B cell (primary cell): ENCODE measurements at regions of chr14 and their contacts with region 1.

Region 1: DNA sequence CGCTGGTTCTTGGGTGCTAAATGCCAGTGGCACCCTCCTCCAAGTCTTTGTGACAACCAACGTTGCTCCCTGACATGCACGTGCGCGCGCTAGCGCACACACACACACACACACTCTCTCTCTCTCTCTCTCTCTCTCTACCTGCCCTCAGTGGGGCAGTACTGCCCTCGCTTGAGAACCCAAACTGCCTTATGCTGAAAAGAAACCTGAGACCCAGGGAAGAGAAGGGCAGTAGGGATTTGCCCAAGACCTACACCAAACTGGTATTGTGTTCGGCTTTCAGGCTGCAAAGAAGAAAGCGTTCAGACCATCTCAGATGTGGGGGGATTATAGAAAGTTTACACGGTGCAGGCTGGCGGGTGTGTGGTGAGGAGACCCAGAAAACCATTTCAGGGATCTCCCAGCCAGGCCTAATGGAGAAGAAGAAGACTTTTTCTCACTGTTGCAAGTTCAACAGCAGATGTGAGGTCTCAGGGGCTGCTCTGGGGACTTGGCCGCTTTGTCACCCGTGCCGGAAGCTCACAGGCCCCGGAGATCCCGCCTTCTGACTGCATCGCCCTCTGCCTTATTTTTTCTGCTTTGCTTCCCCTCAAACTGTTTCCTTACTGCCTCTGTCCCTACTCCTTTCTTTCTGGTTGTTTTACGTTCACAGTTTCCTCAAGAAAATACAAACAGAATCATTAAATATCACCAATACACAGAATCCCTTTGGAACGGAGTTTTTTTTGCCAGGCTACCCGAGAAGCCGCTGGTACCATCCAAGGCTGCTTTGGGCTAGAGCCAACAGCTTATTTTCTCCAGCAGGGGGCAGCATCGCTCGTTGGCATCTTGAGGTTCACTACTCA is 82.4 kb downstream of the PPM1A start:
- DNase-seq: peak; percentile 85
- ATAC-seq: peak; percentile 66
- H3K4me3 ChIP-seq: peak overlapping the region; percentile 49 to 87 (median 73)
- H3K4me3 Mint-ChIP-seq: peak overlapping the region; percentile 90
- H3K27ac ChIP-seq: peak overlapping the region; percentile 63 to 68
- H3K27ac Mint-ChIP-seq: peak overlapping the region; percentile 71
- H3K4me1 ChIP-seq: peaks cover 16 to 20% of the 10 kb centered on the region in 2 donors
- H3K4me1 Mint-ChIP-seq: peaks cover 26% of the 10 kb centered on the region
- H3K27me3 ChIP-seq: peaks cover 0 to 17% (median 4%) of the 10 kb centered on the region in 4 experiments
- H3K27me3 Mint-ChIP-seq: peaks cover 23% of the 10 kb centered on the region
- CTCF ChIP-seq: peak; percentile 98

Region 2: DNA sequence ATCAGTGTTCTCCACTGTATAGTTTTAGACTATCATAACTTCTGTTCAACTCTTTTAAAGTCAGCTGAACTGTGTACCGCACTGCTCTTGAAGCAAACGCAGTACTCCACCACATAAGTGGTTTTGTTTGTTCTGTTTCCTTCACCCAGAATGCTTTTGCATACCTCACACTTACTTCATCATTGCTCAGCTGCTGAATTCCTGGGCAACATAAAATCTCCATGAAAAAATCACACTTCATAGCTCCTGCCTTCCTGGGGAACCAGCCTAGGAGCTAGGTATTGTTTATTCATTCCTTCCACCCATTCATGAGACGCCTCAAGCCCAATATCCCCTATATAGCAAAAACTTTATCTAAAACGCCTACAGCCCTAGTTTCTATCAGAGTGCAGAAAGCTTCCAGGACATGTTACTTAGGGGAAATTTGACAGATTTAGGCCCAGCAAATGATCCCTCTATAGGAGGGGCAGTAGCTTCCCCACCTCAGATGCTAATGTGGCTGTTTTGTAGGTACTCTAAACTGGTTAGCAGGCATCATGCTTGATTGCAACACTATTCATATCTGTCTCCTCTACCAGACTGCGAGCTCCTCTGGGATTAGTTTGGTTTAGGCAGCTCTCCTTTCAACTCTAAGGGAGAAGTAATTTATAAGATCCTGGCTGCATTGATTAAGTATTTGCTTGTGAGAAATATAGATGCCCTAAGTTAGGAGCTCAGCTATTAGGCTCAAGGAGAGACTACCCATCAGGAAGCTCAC is 367.0 kb before region 1 on chr14:
- CTCF ChIA-PET with region 1: interaction called, 3 read pairs
- POLR2A ChIA-PET with region 1: no interaction called
- intact Hi-C with region 1: loop called (anchors 5 kb)
- DNase-seq: no peak
- ATAC-seq: peak; percentile 11
- H3K4me3 ChIP-seq: peak overlapping the region in 3 of 5 experiments; percentile 18 to 63 (median 55)
- H3K4me3 Mint-ChIP-seq: peak overlapping the region; percentile 86
- H3K27ac ChIP-seq: peak overlapping the region; percentile 86
- H3K27ac Mint-ChIP-seq: peak overlapping the region; percentile 88
- H3K4me1 ChIP-seq: peaks cover 10 to 15% of the 10 kb centered on the region in 2 donors
- H3K4me1 Mint-ChIP-seq: peaks cover 13% of the 10 kb centered on the region
- H3K27me3 ChIP-seq: no peaks in the 10 kb centered on the region
- H3K27me3 Mint-ChIP-seq: no peaks in the 10 kb centered on the region
- CTCF ChIP-seq: no peak

Region 3: DNA sequence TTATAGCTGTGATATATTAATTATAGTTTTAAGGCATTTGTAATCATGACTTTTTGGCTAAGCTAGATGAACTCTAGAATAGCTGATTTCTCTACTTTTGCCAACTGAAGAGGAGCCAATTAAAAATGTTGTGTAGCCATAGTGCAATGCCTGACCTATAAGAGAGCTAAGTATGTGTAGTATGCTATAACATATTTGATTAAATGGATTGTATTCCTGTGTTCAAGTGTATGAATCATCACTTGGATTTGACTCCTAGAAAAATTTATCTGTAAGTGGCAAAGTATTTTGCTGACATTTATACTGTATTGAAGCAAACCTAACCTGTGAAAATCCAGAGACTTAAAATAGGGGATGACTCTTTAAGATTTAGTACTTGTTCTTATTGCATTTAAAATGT is 205.5 kb before region 1 on chr14:
- CTCF ChIA-PET with region 1: no interaction called
- POLR2A ChIA-PET with region 1: no interaction called
- intact Hi-C with region 1: no loop called
- DNase-seq: no peak
- ATAC-seq: no peak
- H3K4me3 ChIP-seq: no peak overlapping the region
- H3K4me3 Mint-ChIP-seq: no peak overlapping the region
- H3K27ac ChIP-seq: no peak overlapping the region
- H3K27ac Mint-ChIP-seq: no peak overlapping the region
- H3K4me1 ChIP-seq: no peaks in the 10 kb centered on the region
- H3K4me1 Mint-ChIP-seq: no peaks in the 10 kb centered on the region
- H3K27me3 ChIP-seq: no peaks in the 10 kb centered on the region
- H3K27me3 Mint-ChIP-seq: no peaks in the 10 kb centered on the region
- CTCF ChIP-seq: no peak

Region 4: DNA sequence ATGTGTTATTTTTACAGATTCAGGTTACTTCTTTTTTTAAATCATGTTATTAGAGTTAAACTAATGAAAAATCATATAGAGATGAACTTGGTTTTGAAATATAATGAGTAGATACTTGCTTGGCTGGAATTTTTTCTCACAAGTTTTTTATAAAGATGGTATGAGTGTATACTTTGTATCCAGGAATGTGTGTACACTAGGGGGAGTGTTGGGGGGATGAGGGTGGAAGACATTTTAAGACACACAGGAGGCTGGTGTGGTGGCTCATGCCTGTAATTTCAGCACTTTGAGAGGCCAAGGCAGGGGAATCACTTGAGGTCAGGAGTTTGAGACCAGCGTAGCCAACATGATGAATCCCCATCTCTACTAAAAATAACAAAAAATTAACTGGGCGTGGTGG is 59.2 kb before region 1 on chr14:
- CTCF ChIA-PET with region 1: interaction called, 7 read pairs
- POLR2A ChIA-PET with region 1: no interaction called
- intact Hi-C with region 1: loop called (anchors 5 kb)
- DNase-seq: no peak
- ATAC-seq: no peak
- H3K4me3 ChIP-seq: no peak overlapping the region
- H3K4me3 Mint-ChIP-seq: no peak overlapping the region
- H3K27ac ChIP-seq: no peak overlapping the region
- H3K27ac Mint-ChIP-seq: no peak overlapping the region
- H3K4me1 ChIP-seq: peaks cover 11 to 16% of the 10 kb centered on the region in 2 donors
- H3K4me1 Mint-ChIP-seq: peaks cover 42% of the 10 kb centered on the region
- H3K27me3 ChIP-seq: no peaks in the 10 kb centered on the region
- H3K27me3 Mint-ChIP-seq: no peaks in the 10 kb centered on the region
- CTCF ChIP-seq: no peak

Region 5: DNA sequence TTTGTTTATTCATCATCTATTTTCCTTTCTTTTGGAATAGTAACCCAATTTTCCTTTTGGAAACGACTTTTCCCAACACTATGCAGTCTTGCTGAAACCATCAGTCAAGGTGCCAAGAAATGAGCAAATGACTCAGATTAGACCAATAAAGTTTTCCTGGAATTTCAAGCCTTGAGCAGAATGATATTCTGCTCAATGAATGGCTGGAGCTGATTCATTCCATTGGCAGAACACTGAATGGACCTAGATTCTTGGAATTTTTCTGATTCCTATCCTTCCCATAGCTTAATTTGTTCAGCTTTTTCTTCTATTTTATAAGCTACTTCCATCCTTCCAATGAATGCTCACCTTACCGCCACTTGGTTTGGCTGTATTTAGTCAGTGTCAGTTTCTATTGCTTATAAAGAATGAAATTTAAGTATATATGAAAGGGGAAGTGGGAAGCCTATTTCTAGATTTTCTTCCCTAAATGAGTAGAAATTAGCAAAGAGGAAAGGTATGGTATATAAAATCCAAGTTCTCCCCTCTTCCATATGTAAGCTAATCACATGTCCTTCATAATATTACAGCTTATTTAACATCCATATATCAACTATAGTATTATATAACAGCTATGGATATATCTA is 65.4 kb after region 1 on chr14:
- CTCF ChIA-PET with region 1: no interaction called
- POLR2A ChIA-PET with region 1: no interaction called
- intact Hi-C with region 1: no loop called
- DNase-seq: no peak
- ATAC-seq: no peak
- H3K4me3 ChIP-seq: no peak overlapping the region
- H3K4me3 Mint-ChIP-seq: no peak overlapping the region
- H3K27ac ChIP-seq: no peak overlapping the region
- H3K27ac Mint-ChIP-seq: no peak overlapping the region
- H3K4me1 ChIP-seq: no peaks in the 10 kb centered on the region
- H3K4me1 Mint-ChIP-seq: no peaks in the 10 kb centered on the region
- H3K27me3 ChIP-seq: no peaks in the 10 kb centered on the region
- H3K27me3 Mint-ChIP-seq: peaks cover 7% of the 10 kb centered on the region
- CTCF ChIP-seq: no peak

Region 6: DNA sequence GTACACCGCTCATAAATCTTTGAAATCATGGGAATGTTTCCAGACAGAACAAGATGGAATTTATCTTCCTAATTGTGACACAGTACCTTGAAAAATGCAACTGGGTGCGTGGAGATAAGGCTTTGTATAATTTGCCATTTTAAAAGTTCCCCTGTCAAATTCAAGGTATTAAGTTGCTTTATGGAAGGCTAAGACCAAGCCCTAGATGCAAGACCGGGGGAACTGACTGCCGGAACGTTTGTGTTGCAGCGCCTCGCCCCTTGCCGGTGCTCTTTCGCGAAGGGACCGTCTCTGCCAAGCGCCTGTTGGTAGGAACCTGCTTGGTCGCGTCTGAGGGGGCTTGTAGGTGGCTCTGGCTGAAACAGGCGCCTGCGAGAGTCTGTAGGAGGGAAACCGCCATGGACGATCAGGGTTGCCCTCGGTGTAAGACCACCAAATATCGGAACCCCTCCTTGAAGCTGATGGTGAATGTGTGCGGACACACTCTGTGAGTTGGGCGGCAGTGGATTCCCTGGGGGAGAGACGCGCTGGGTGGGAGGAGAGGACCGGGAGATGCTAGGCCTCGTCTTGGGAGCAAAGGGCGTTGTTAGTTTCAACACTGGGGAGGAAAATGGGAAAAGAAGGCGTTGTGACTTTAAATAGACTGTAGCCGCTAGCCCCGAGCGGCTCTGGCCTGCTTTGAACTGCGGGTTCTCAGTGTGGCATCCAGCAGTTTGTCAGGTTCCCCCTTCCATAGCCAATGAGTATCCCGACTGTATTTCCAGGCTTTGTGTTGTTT is 403.2 kb after region 1 on chr14 and contains the start of gene MNAT1:
- CTCF ChIA-PET with region 1: no interaction called
- POLR2A ChIA-PET with region 1: no interaction called
- intact Hi-C with region 1: loop called (anchors 1 kb)
- DNase-seq: peak; percentile 86
- ATAC-seq: peak; percentile 93
- H3K4me3 ChIP-seq: peak within 1 kb of the TSS; percentile 69 to 99 (median 95)
- H3K4me3 Mint-ChIP-seq: peak within 1 kb of the TSS; percentile 98
- H3K27ac ChIP-seq: peak within 1 kb of the TSS; percentile 42 to 81
- H3K27ac Mint-ChIP-seq: peak within 1 kb of the TSS; percentile 81
- H3K4me1 ChIP-seq: peaks cover 9 to 14% of the 10 kb centered on the region in 2 donors
- H3K4me1 Mint-ChIP-seq: peaks cover 20% of the 10 kb centered on the region
- H3K27me3 ChIP-seq: peaks cover 0 to 24% (median 11%) of the 10 kb centered on the region in 4 experiments
- H3K27me3 Mint-ChIP-seq: peaks cover 23% of the 10 kb centered on the region
- CTCF ChIP-seq: no peak
- total RNA-seq, gene MNAT1: 23.7 and 28.2 TPM in 2 replicates